ENCODE measurements at regions of chr1 and their contacts with region 1.

Region 1: GRCh38 chr1:204363335-204364124 is 3.8 kb upstream of the PLEKHA6 start:
- DNase-seq: peak; percentile 44 to 70
- ATAC-seq: peak; percentile 54 to 70; a peak in 4 of 6 replicates
- H3K4me3 ChIP-seq: no peak overlapping the region
- H3K27ac ChIP-seq: peak overlapping the region; percentile 48 to 71; a peak in 4 of 6 replicates
- H3K4me1 ChIP-seq: peaks cover 31% of the 10 kb centered on the region
- CTCF ChIP-seq: peak; percentile 98
- EP300 ChIP-seq: no peak
- POLR2A ChIP-seq: no peak
- RAD21 ChIP-seq: peak; percentile 98

Region 2: GRCh38 chr1:203558064-203558760 is 805.3 kb before region 1 on chr1:
- CTCF ChIA-PET with region 1: no interaction called
- POLR2A ChIA-PET with region 1: no interaction called
- DNase-seq: peak; percentile 65 to 76
- ATAC-seq: peak; percentile 82 to 89
- H3K4me3 ChIP-seq: no peak overlapping the region
- H3K27ac ChIP-seq: peak overlapping the region; percentile 59 to 80
- H3K4me1 ChIP-seq: peaks cover 40% of the 10 kb centered on the region
- CTCF ChIP-seq: no peak
- EP300 ChIP-seq: peak; percentile 59 to 74; a peak in 2 of 5 replicates
- POLR2A ChIP-seq: no peak
- RAD21 ChIP-seq: peak; percentile 8 to 48; a peak in 1 of 5 replicates

Region 3: GRCh38 chr1:204162231-204163074 is 201.1 kb before region 1 on chr1:
- CTCF ChIA-PET with region 1: interaction called, 219 read pairs
- POLR2A ChIA-PET with region 1: no interaction called
- DNase-seq: peak; percentile 77 to 85
- ATAC-seq: peak; percentile 89 to 98
- H3K4me3 ChIP-seq: no peak overlapping the region
- H3K27ac ChIP-seq: no peak overlapping the region
- H3K4me1 ChIP-seq: no peaks in the 10 kb centered on the region
- CTCF ChIP-seq: peak; percentile 98
- EP300 ChIP-seq: no peak
- POLR2A ChIP-seq: no peak
- RAD21 ChIP-seq: peak; percentile 97

Region 4: GRCh38 chr1:204207136-204207616 is 156.4 kb before region 1 on chr1:
- CTCF ChIA-PET with region 1: interaction called, 133 read pairs
- POLR2A ChIA-PET with region 1: no interaction called
- DNase-seq: peak; percentile 37 to 84
- ATAC-seq: peak; percentile 89 to 99
- H3K4me3 ChIP-seq: no peak overlapping the region
- H3K27ac ChIP-seq: no peak overlapping the region
- H3K4me1 ChIP-seq: peaks cover 2% of the 10 kb centered on the region; the same call in 1 of the 3 replicates
- CTCF ChIP-seq: peak; percentile 87
- EP300 ChIP-seq: no peak
- POLR2A ChIP-seq: no peak
- RAD21 ChIP-seq: peak; percentile 65 to 69

Region 5: GRCh38 chr1:204249761-204250685 is 113.5 kb before region 1 on chr1:
- CTCF ChIA-PET with region 1: interaction called, 840 read pairs
- POLR2A ChIA-PET with region 1: no interaction called
- DNase-seq: no peak
- ATAC-seq: no peak
- H3K4me3 ChIP-seq: no peak overlapping the region
- H3K27ac ChIP-seq: no peak overlapping the region
- H3K4me1 ChIP-seq: peaks cover 16% of the 10 kb centered on the region
- CTCF ChIP-seq: no peak
- EP300 ChIP-seq: no peak
- POLR2A ChIP-seq: no peak
- RAD21 ChIP-seq: no peak

Region 6: GRCh38 chr1:204314171-204314895 is 49.2 kb before region 1 on chr1:
- CTCF ChIA-PET with region 1: interaction called, 26 read pairs
- POLR2A ChIA-PET with region 1: no interaction called
- DNase-seq: no peak
- ATAC-seq: no peak
- H3K4me3 ChIP-seq: no peak overlapping the region
- H3K27ac ChIP-seq: peak overlapping the region; percentile 38 to 43; a peak in 4 of 6 replicates
- H3K4me1 ChIP-seq: peaks cover 48% of the 10 kb centered on the region
- CTCF ChIP-seq: no peak
- EP300 ChIP-seq: no peak
- POLR2A ChIP-seq: no peak
- RAD21 ChIP-seq: no peak

Region 7: DNA sequence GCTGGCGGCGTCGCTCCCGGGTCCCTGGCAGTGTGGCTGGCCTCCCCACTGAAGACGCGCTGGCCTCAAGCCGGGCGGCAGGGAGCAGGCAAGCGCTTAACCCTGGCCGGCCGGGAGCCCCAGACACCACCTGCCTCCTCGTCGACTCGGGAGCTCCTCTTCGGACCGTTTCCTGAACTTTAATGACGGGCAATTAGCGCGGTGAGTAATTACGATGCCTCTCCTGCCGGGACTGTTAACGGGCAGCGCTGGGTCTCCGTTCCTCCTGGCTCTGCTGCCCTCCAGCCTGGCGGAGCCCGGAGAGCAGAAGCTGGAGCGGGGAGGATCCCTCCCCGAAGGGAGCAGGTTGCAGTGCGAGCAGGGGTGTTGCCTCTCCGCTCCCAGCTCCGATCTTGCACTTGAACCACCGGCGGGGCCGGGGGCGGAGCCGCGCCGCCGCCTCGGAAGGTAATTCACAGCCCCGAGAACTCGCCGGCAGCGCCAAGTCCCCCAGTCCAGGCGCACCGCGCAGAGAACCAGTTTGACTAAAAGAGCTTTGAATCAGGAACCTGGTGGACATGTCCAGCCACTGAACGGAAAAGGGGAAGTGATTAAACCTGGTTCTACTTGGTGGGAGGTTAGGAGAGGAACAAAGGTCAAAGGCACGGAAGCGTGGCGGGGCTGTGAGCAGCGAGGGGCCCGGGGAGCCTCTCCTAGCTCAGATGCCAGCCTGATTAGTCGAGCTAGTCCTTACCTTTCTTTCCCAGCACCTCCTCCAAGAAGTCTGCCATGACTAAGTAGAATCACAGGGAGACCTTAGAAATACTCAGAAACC is 14.5 kb after region 1 on chr1:
- CTCF ChIA-PET with region 1: interaction called, 149 read pairs
- POLR2A ChIA-PET with region 1: no interaction called
- DNase-seq: peak; percentile 59 to 64
- ATAC-seq: peak; percentile 79 to 80
- H3K4me3 ChIP-seq: peak overlapping the region; percentile 76
- H3K27ac ChIP-seq: peak overlapping the region; percentile 94 to 95
- H3K4me1 ChIP-seq: peaks cover 33% of the 10 kb centered on the region
- CTCF ChIP-seq: no peak
- EP300 ChIP-seq: no peak
- POLR2A ChIP-seq: peak; percentile 42
- RAD21 ChIP-seq: no peak